ENCODE measurements at regions of chr12 and their contacts with region 1.

Region 1: GRCh38 chr12:2944401-2945047 is 14.7 kb upstream of the TEAD4 start:
- DNase-seq: peak; percentile 83
- ATAC-seq: peak; percentile 86
- H3K4me3 Mint-ChIP-seq: no peak overlapping the region
- H3K27ac Mint-ChIP-seq: no peak overlapping the region
- H3K4me1 Mint-ChIP-seq: no peaks in the 10 kb centered on the region
- H3K27me3 Mint-ChIP-seq: peaks cover 3% of the 10 kb centered on the region

Region 2: GRCh38 chr12:2057041-2057794 is 887.3 kb before region 1 on chr12:
- CTCF ChIA-PET with region 1: no interaction called
- POLR2A ChIA-PET with region 1: no interaction called
- intact Hi-C with region 1: no loop called
- DNase-seq: peak; percentile 80
- ATAC-seq: no peak
- H3K4me3 Mint-ChIP-seq: no peak overlapping the region
- H3K27ac Mint-ChIP-seq: no peak overlapping the region
- H3K4me1 Mint-ChIP-seq: peaks cover 6% of the 10 kb centered on the region
- H3K27me3 Mint-ChIP-seq: peaks cover 35% of the 10 kb centered on the region

Region 3: GRCh38 chr12:2853626-2854025 is 90.9 kb before region 1 on chr12:
- CTCF ChIA-PET with region 1: interaction called, 34 read pairs
- POLR2A ChIA-PET with region 1: interaction called, 3 read pairs
- intact Hi-C with region 1: loop called (anchors 1 kb)
- DNase-seq: peak; percentile 74
- ATAC-seq: peak; percentile 78
- H3K4me3 Mint-ChIP-seq: no peak overlapping the region
- H3K27ac Mint-ChIP-seq: no peak overlapping the region
- H3K4me1 Mint-ChIP-seq: peaks cover 3% of the 10 kb centered on the region
- H3K27me3 Mint-ChIP-seq: no peaks in the 10 kb centered on the region

Region 4: DNA sequence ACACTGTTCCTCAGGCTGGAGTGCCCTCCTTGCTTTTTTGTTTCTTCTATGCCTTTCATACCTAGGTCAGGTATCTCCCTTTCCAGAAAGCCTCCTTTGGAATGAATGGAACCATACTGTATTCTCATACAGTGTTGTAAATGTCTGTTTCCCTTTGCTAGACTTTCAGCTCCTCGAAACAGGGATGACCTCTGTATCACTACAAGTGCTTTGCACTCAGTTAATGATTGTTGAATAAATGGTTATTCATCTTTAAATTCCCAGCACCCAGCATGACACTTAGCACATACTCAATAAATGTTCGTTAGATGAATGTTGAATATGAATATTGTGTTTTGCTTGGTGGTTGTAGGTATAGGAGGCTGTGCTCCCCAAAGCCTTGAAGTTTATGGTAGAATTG is 59.7 kb before region 1 on chr12:
- CTCF ChIA-PET with region 1: interaction called, 7 read pairs
- POLR2A ChIA-PET with region 1: no interaction called
- intact Hi-C with region 1: loop called (anchors 1 to 2 kb)
- DNase-seq: no peak
- ATAC-seq: no peak
- H3K4me3 Mint-ChIP-seq: no peak overlapping the region
- H3K27ac Mint-ChIP-seq: no peak overlapping the region
- H3K4me1 Mint-ChIP-seq: peaks cover 13% of the 10 kb centered on the region
- H3K27me3 Mint-ChIP-seq: no peaks in the 10 kb centered on the region

Region 5: GRCh38 chr12:2930865-2931264 is 13.7 kb before region 1 on chr12:
- CTCF ChIA-PET with region 1: interaction called, 10 read pairs
- POLR2A ChIA-PET with region 1: no interaction called
- intact Hi-C with region 1: no loop called
- DNase-seq: no peak
- ATAC-seq: no peak
- H3K4me3 Mint-ChIP-seq: no peak overlapping the region
- H3K27ac Mint-ChIP-seq: no peak overlapping the region
- H3K4me1 Mint-ChIP-seq: peaks cover under 1% of the 10 kb centered on the region
- H3K27me3 Mint-ChIP-seq: no peaks in the 10 kb centered on the region